ENCODE measurements at regions of chr1 and their contacts with region 1.

Region 1: DNA sequence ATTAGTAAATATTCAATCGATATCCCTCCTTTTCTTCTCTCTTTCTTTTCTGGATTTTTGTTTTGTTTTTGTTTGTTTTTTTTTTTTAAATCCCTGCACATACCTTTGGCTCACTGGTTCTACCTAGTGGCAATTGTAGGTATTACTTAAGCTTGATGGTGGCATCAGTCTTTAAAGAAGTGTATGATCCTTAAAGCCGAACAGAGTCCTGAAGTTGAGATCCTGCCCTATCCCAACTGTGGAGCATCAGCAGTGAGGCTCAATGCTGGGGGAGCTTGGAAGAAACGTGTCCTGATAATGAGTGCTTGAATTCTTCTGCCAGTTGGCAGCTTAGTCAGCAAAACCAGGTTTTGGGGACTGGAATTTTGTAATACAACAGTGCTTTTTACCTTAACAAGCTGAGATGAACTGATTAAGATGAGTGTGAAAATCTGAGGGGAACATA is 60.8 kb downstream of the FASLG start:
- ATAC-seq: peak in 3 of 8 experiments; percentile 40 to 58 (median 45)
- H3K4me3 ChIP-seq: no peak overlapping the region
- H3K27ac ChIP-seq: no peak overlapping the region
- H3K4me1 ChIP-seq: peaks cover 1 to 11% of the 10 kb centered on the region in 2 donors

Region 2: DNA sequence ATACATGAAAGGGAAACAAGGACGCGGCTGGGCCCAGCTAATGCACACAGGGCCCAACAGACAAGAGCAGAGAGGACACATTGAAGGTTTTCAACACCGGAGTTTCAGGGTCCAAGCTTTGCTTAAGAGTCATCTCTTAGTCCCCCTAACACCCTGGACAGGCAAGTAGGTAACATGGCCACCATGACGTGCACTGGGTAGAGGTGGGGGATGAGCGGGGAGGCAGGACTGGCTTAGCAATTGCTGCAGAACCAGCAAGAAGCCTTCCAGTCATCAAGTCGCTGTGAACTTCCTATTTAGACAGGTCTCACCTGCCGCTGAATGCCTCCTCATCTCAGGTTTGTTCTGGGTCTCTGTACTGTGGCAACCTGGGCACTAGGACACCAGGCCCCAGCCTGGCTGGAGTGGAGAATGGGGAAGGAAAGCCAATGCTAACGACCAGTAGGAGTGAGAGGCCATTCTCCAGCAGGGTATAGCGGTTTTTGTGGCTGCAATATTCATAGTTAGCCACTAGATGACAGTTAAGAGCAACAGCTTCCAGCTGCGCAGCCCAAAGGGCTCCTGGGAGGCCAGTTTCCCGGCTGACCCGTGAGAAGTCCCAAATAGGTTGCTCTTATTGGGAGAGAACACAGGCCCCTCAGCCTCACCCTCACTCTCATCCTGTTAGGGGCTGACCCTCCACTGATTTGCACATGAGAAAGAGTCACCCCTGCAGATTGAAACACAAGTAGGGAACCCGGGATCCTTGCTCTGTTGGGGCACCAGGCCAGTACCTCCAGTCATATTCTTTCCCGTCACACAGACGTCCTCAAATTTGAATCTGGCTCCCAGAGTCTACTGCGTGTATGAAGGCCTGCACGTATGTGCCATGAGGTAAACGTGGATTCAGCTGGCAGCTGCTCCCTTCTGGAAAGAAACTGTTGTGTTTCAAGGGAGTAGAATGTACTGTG is 269.9 kb before region 1 on chr1:
- in situ Hi-C with region 1: loop called in 2 of 9 experiments (anchors 25 kb)
- ATAC-seq: peak; percentile 75 to 99 (median 90)
- H3K4me3 ChIP-seq: no peak overlapping the region
- H3K27ac ChIP-seq: no peak overlapping the region
- H3K4me1 ChIP-seq: peaks cover 2 to 7% of the 10 kb centered on the region in 2 donors

Region 3: GRCh38 chr1:172609528-172609927 is 110.2 kb before region 1 on chr1:
- in situ Hi-C with region 1: loop called in 1 of 9 experiments (anchors 25 kb)
- ATAC-seq: peak in 4 of 8 experiments; percentile 33 to 57 (median 44)
- H3K4me3 ChIP-seq: no peak overlapping the region
- H3K27ac ChIP-seq: no peak overlapping the region
- H3K4me1 ChIP-seq: no peaks in the 10 kb centered on the region

Region 4: GRCh38 chr1:173122344-173122935 is 402.7 kb after region 1 on chr1:
- in situ Hi-C with region 1: no loop called
- ATAC-seq: peak in 3 of 8 experiments; percentile 3 to 60 (median 42)
- H3K4me3 ChIP-seq: no peak overlapping the region
- H3K27ac ChIP-seq: peak overlapping the region in 1 of 2 donors; percentile 11
- H3K4me1 ChIP-seq: peaks cover 12 to 13% of the 10 kb centered on the region in 2 donors

Measured in motor neuron (in vitro differentiated cells).